ENCODE measurements at regions of chr10 and their contacts with region 1.

Region 1: DNA sequence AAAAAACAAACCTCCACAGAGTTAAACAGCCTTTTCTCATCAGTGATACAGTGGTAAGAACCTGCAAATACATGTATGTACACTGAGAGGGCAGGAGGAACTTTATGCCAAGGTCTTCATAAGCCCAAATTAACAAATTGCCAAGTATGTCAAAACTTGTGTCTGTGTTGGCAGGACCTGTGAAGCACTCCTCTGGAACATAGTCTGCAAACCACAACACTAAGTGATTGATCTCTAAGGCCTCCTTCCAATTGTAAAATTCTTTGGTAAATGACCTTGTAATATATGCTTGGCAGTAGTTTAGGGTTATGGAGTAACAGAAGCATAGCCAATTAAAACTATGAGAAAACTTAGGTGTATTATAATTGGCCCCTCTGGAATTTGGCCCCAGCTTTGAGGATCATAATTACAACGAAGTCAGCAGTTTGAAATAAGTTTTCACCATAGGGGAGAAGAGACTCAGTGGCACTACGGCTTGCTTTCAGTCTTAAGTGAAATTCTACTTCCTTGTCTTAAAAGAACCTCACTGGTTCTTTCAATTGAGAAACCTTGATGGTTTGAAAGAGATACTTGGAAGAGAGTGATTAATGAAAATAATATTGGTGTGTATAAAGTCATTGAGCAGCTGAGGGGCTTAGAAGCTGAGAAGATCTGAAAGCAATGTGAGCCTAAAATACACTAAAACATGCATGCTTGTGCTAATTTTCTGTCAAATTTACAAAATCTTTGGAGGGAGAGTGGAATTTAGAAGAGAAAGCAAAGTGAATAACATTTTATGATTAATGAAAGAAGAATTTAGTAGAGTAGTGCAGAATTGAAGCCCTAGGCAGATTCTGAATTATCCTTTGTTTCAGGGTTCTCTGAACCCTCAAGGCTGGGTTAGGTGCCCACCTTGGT is 57.6 kb downstream of the CNNM2 start:
- DNase-seq: no peak
- ATAC-seq: peak; percentile 42
- H3K4me3 ChIP-seq: no peak overlapping the region
- H3K27ac ChIP-seq: no peak overlapping the region
- H3K4me1 ChIP-seq: peaks cover 6% of the 10 kb centered on the region
- H3K27me3 ChIP-seq: no peaks in the 10 kb centered on the region
- CTCF ChIP-seq: no peak
- POLR2A ChIP-seq: no peak
- RAD21 ChIP-seq: no peak

Region 2: GRCh38 chr10:102951316-102951715 is 24.4 kb before region 1 on chr10:
- CTCF ChIA-PET with region 1: no interaction called
- POLR2A ChIA-PET with region 1: no interaction called
- dilution Hi-C with region 1: no loop called
- in situ Hi-C with region 1: no loop called
- intact Hi-C with region 1: loop called (anchors 1 kb)
- DNase-seq: peak; percentile 56
- ATAC-seq: no peak; the same call in 1 of the 2 replicates
- H3K4me3 ChIP-seq: no peak overlapping the region
- H3K27ac ChIP-seq: no peak overlapping the region
- H3K4me1 ChIP-seq: no peaks in the 10 kb centered on the region; the same call in 1 of the 2 replicates
- H3K27me3 ChIP-seq: no peaks in the 10 kb centered on the region
- CTCF ChIP-seq: no peak
- POLR2A ChIP-seq: no peak
- RAD21 ChIP-seq: no peak

Region 3: GRCh38 chr10:102962951-102963755 is 12.6 kb before region 1 on chr10:
- CTCF ChIA-PET with region 1: no interaction called
- POLR2A ChIA-PET with region 1: no interaction called
- dilution Hi-C with region 1: no loop called
- in situ Hi-C with region 1: no loop called
- intact Hi-C with region 1: loop called (anchors 2 kb)
- DNase-seq: peak; percentile 37
- ATAC-seq: peak; percentile 54
- H3K4me3 ChIP-seq: no peak overlapping the region
- H3K27ac ChIP-seq: peak overlapping the region; percentile 71; the same call in 1 of the 2 replicates
- H3K4me1 ChIP-seq: peaks cover 14% of the 10 kb centered on the region
- H3K27me3 ChIP-seq: no peaks in the 10 kb centered on the region
- CTCF ChIP-seq: no peak
- POLR2A ChIP-seq: no peak
- RAD21 ChIP-seq: no peak